Breast epithelium (tissue), 4 donors: ENCODE measurements at regions of chr1 and their contacts with region 1.

Region 1: GRCh38 chr1:159804924-159805323 is 2.8 kb downstream of the FCRL6 start:
- DNase-seq: no peak
- H3K4me3 ChIP-seq: no peak overlapping the region
- H3K27ac ChIP-seq: no peak overlapping the region
- H3K4me1 ChIP-seq: no peaks in the 10 kb centered on the region
- H3K27me3 ChIP-seq: no peaks in the 10 kb centered on the region
- CTCF ChIP-seq: no peak
- POLR2A ChIP-seq: no peak

Region 2: DNA sequence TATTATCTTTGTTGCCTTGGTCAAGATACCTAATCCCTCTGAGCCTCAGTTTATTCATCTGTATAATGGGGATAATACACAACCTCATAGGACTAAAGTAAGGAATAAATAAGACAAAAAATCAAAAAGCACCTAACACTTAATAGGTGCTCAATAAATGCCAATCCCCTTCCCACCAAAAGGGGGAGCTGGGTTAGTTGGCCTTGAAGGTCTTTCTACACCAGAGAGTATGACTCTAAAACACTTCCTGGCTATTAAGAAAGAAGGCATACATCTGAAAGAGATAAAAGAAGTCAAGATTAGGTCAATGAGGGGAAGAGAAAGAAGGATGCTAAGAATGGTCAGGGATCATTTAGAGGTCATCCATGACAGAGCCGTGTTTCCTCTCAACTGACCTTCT is 46.5 kb after region 1 on chr1:
- intact Hi-C with region 1: loop called (anchors 2 kb)
- DNase-seq: no peak
- H3K4me3 ChIP-seq: no peak overlapping the region
- H3K27ac ChIP-seq: no peak overlapping the region
- H3K4me1 ChIP-seq: no peaks in the 10 kb centered on the region
- H3K27me3 ChIP-seq: no peaks in the 10 kb centered on the region
- CTCF ChIP-seq: no peak
- POLR2A ChIP-seq: no peak

Region 3: GRCh38 chr1:160416369-160416768 is 611.4 kb after region 1 on chr1:
- intact Hi-C with region 1: no loop called
- DNase-seq: no peak
- H3K4me3 ChIP-seq: no peak overlapping the region
- H3K27ac ChIP-seq: no peak overlapping the region
- H3K4me1 ChIP-seq: no peaks in the 10 kb centered on the region
- H3K27me3 ChIP-seq: no peaks in the 10 kb centered on the region
- CTCF ChIP-seq: no peak
- POLR2A ChIP-seq: no peak